Activated B cell treated with CpG ODN at 0.5 μM for 24 hours (primary cell): ENCODE measurements at regions of chr6 and their contacts with region 1.

Region 1: GRCh38 chr6:139375232-139376016 is 976 bp upstream of the CITED2 start:
- DNase-seq: peak; percentile 81
- ATAC-seq: peak; percentile 51
- H3K4me3 Mint-ChIP-seq: peak overlapping the region; percentile 99
- H3K27ac Mint-ChIP-seq: peak overlapping the region; percentile 95
- H3K4me1 Mint-ChIP-seq: peaks cover 27% of the 10 kb centered on the region
- H3K27me3 Mint-ChIP-seq: no peaks in the 10 kb centered on the region
- CTCF ChIP-seq: no peak

Region 2: DNA sequence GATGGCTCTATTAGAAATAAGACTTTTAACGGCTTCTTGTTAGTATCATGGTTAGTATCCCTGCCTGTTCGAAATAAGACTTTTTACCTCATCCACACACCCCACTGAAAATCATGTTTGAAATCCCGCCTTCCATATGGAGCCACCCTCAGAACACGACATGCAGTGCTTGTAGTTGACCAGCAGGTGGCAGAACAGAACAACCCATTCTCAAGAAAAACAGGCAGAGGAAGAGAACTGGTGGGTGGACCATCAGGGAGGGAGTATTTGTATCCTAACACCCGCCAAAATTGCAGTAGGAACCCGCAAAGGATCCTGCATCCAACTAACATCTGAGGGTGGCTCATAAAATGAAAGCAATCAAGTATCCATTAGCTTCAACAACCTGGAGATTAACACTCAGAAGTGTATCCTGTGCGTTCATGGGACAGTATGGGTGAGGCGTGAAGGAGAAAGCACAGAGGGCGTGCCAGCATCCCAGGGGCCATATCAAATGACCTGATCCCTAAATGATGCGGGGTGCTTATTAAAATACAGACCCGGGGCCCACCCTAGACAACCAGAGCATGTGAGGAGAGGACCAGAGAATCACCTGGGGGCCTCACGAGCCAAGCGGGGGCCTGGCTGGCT is 786.5 kb before region 1 on chr6:
- CTCF ChIA-PET with region 1: interaction called, 5 read pairs
- POLR2A ChIA-PET with region 1: interaction called, 5 read pairs
- intact Hi-C with region 1: loop called (anchors 2 kb)
- DNase-seq: no peak
- ATAC-seq: peak; percentile 48
- H3K4me3 Mint-ChIP-seq: no peak overlapping the region
- H3K27ac Mint-ChIP-seq: no peak overlapping the region
- H3K4me1 Mint-ChIP-seq: peaks cover 27% of the 10 kb centered on the region
- H3K27me3 Mint-ChIP-seq: no peaks in the 10 kb centered on the region
- CTCF ChIP-seq: peak; percentile 71

Region 3: DNA sequence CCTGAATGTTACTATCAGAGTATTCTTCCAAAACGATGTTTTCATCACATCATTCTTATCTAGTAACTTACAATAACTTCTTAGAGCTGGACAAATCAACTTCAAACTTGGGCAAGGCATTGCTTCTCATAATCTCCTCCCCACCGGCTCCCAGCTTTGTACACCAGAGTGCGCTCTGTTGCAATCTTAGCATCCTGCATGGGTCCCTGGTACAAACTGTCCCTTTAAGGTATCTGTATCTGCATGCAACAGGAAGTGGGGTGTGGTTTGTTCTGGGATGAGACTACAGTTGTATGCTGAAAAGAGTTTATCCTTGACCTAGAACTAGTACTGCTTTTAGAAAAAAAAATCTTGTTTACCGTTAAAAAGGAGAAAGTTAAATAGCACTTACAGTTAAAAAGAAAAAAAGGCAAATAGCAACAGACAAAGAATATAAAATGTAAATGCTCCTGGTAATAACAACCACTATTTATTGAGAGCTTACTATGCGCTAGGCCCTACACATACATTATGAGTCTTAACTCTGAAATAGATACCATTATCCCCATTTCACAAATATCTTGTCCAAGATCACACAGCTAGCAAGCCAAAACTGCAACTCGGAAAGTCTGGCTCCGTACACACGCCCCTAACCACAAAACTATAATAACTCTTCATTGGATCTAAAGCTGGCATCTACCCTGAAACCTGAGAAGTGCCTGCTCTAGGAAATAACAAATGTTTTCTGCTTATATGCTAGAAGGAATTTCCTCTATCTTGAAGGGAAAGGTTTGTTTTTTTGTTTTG is 250.3 kb before region 1 on chr6:
- CTCF ChIA-PET with region 1: interaction called, 12 read pairs
- POLR2A ChIA-PET with region 1: interaction called, 16 read pairs
- intact Hi-C with region 1: loop called (anchors 2 kb)
- DNase-seq: peak; percentile 42
- ATAC-seq: peak; percentile 100
- H3K4me3 Mint-ChIP-seq: peak overlapping the region; percentile 62
- H3K27ac Mint-ChIP-seq: peak overlapping the region; percentile 88
- H3K4me1 Mint-ChIP-seq: peaks cover 38% of the 10 kb centered on the region
- H3K27me3 Mint-ChIP-seq: no peaks in the 10 kb centered on the region
- CTCF ChIP-seq: no peak

Region 4: GRCh38 chr6:139271056-139271455 is 104.4 kb before region 1 on chr6:
- CTCF ChIA-PET with region 1: interaction called, 8 read pairs
- POLR2A ChIA-PET with region 1: interaction called, 27 read pairs
- intact Hi-C with region 1: no loop called
- DNase-seq: no peak
- ATAC-seq: peak; percentile 94
- H3K4me3 Mint-ChIP-seq: peak overlapping the region; percentile 75
- H3K27ac Mint-ChIP-seq: peak overlapping the region; percentile 96
- H3K4me1 Mint-ChIP-seq: peaks cover 80% of the 10 kb centered on the region
- H3K27me3 Mint-ChIP-seq: no peaks in the 10 kb centered on the region
- CTCF ChIP-seq: no peak

Region 5: GRCh38 chr6:139386404-139386803 is 11.0 kb after region 1 on chr6:
- CTCF ChIA-PET with region 1: interaction called, 4 read pairs
- POLR2A ChIA-PET with region 1: interaction called, 21 read pairs
- intact Hi-C with region 1: no loop called
- DNase-seq: no peak
- ATAC-seq: no peak
- H3K4me3 Mint-ChIP-seq: no peak overlapping the region
- H3K27ac Mint-ChIP-seq: no peak overlapping the region
- H3K4me1 Mint-ChIP-seq: no peaks in the 10 kb centered on the region
- H3K27me3 Mint-ChIP-seq: no peaks in the 10 kb centered on the region
- CTCF ChIP-seq: no peak

Region 6: GRCh38 chr6:140105857-140106256 is 730.4 kb after region 1 on chr6:
- CTCF ChIA-PET with region 1: no interaction called
- POLR2A ChIA-PET with region 1: no interaction called
- intact Hi-C with region 1: loop called (anchors 5 kb)
- DNase-seq: no peak
- ATAC-seq: no peak
- H3K4me3 Mint-ChIP-seq: no peak overlapping the region
- H3K27ac Mint-ChIP-seq: no peak overlapping the region
- H3K4me1 Mint-ChIP-seq: no peaks in the 10 kb centered on the region
- H3K27me3 Mint-ChIP-seq: no peaks in the 10 kb centered on the region
- CTCF ChIP-seq: no peak